Endothelial cell of umbilical vein (primary cell): ENCODE measurements at regions of chr6 and their contacts with region 1.

Region 1: DNA sequence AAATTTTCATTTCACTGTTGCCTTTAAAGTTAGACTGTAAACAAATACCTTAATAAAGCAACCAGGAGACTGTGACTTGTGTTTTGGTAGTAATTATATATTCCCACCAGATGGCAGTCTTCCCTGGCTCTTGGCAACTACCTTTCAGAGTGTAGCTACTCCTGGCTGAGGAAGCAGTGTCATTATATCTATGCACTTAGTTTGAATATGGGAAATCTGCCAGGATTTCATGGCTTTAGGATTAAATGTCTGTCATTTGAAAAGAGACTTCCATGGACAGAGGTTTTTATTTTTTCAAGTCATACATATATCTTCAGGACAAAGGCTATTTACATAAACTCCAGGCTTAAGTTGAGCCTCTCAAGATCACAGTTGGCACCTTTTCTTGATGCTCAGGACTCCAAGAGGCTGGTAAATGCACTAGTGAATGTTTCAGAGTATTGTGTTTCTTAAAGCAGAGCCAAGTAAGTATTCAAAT is 160.1 kb downstream of the C6orf58 start:
- DNase-seq: peak; percentile 79
- H3K4me3 ChIP-seq: no peak overlapping the region
- H3K27ac ChIP-seq: no peak overlapping the region
- H3K4me1 ChIP-seq: no peaks in the 10 kb centered on the region
- H3K27me3 ChIP-seq: peaks cover 1 to 4% of the 10 kb centered on the region in 2 experiments
- CTCF ChIP-seq: peak; percentile 31 to 46
- POLR2A ChIP-seq: no peak

Region 2: GRCh38 chr6:127725821-127726220 is 11.2 kb before region 1 on chr6:
- CTCF ChIA-PET with region 1: interaction called, 12 read pairs
- POLR2A ChIA-PET with region 1: no interaction called
- dilution Hi-C with region 1: no loop called
- intact Hi-C with region 1: no loop called
- DNase-seq: no peak
- H3K4me3 ChIP-seq: no peak overlapping the region
- H3K27ac ChIP-seq: no peak overlapping the region
- H3K4me1 ChIP-seq: no peaks in the 10 kb centered on the region
- H3K27me3 ChIP-seq: peaks cover 9 to 42% of the 10 kb centered on the region in 2 experiments
- CTCF ChIP-seq: no peak
- POLR2A ChIP-seq: no peak

Region 3: GRCh38 chr6:127748290-127748689 is 11.2 kb after region 1 on chr6:
- CTCF ChIA-PET with region 1: interaction called, 14 read pairs
- POLR2A ChIA-PET with region 1: no interaction called
- dilution Hi-C with region 1: no loop called
- intact Hi-C with region 1: no loop called
- DNase-seq: no peak
- H3K4me3 ChIP-seq: no peak overlapping the region
- H3K27ac ChIP-seq: no peak overlapping the region
- H3K4me1 ChIP-seq: no peaks in the 10 kb centered on the region
- H3K27me3 ChIP-seq: peaks cover 0 to 2% of the 10 kb centered on the region in 2 experiments
- CTCF ChIP-seq: no peak
- POLR2A ChIP-seq: no peak

Region 4: DNA sequence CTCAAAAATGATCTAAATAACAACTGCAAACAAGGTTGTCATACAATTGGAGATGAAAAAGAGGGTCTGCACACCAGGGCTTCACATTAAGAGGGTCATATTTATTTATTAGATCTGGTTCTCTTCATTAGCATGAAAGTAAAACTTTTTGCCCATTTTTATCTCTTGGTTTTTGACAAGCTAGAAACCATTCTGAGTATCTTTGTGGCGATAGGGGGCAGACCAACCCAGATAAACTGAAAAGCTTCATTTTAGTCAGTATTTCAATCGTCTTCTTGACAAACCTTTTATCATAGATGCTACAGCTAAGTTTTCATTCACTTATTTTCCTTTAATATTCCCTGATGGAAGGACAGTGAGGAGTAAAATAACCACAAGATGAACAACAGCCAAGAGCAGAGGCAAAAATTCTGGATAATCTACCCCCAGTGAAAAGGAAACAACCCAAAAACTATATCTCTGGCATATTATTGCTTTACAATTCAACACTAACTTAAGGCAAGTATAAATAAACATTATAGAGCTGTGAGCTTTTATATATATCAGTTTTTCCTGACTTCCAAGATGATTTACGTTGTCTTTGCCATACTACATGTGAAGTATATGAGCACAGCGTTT is 118.6 kb after region 1 on chr6:
- CTCF ChIA-PET with region 1: interaction called, 15 read pairs
- POLR2A ChIA-PET with region 1: no interaction called
- dilution Hi-C with region 1: no loop called
- intact Hi-C with region 1: no loop called
- DNase-seq: peak; percentile 61
- H3K4me3 ChIP-seq: no peak overlapping the region
- H3K27ac ChIP-seq: no peak overlapping the region
- H3K4me1 ChIP-seq: no peaks in the 10 kb centered on the region
- H3K27me3 ChIP-seq: no peaks in the 10 kb centered on the region
- CTCF ChIP-seq: peak; percentile 18 to 45
- POLR2A ChIP-seq: no peak

Region 5: GRCh38 chr6:128112494-128112893 is 375.4 kb after region 1 on chr6:
- CTCF ChIA-PET with region 1: no interaction called
- POLR2A ChIA-PET with region 1: no interaction called
- dilution Hi-C with region 1: no loop called
- intact Hi-C with region 1: no loop called
- DNase-seq: peak; percentile 62
- H3K4me3 ChIP-seq: no peak overlapping the region
- H3K27ac ChIP-seq: no peak overlapping the region
- H3K4me1 ChIP-seq: no peaks in the 10 kb centered on the region
- H3K27me3 ChIP-seq: no peaks in the 10 kb centered on the region
- CTCF ChIP-seq: no peak
- POLR2A ChIP-seq: no peak

Region 6: GRCh38 chr6:128327890-128328289 is 590.8 kb after region 1 on chr6:
- CTCF ChIA-PET with region 1: interaction called, 22 read pairs
- POLR2A ChIA-PET with region 1: no interaction called
- dilution Hi-C with region 1: no loop called
- intact Hi-C with region 1: loop called (anchors 1 kb)
- DNase-seq: no peak
- H3K4me3 ChIP-seq: no peak overlapping the region
- H3K27ac ChIP-seq: no peak overlapping the region
- H3K4me1 ChIP-seq: no peaks in the 10 kb centered on the region
- H3K27me3 ChIP-seq: no peaks in the 10 kb centered on the region
- CTCF ChIP-seq: peak; percentile 35 to 37
- POLR2A ChIP-seq: no peak

Region 7: DNA sequence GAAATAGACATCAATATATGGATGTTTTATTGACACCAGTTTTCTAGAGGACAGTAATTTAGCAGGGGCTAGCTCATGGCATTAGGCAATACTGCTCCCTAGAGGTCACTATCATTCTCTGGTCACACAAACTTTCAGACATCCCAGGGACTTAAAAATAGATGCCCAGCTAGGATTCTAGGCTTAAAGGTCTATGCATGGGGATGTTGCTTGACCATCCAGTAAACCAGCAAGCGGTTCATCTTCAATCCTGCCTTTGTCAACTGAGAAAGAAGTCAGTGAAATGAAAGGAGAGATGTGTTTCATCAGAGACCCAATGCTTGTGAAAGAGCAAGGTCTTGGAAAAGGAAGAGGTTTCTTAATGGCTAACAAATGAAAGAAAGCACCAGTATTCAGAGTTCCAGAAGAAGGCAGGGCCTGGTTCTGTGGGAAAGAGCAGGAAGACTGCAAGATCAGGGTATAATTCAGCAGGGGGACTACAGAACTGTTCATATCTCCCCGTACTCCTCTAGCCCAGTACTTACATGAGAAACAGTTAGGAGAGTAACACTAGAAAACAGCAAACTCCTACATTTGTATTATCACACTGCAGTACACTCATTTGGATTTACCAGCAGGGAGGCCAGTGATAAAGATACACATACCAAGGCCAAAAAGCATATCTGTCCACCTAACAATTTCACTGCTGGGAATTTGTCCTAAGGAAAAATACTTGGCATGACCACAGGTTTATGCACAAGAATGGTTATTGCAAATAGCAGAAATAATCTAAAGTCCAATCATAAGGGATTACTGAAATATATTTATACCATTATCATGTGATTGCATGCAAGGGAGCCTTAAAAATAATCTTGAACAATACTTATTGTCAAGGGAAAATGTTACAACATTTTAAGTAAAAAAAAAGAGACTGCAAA is 994.5 kb after region 1 on chr6:
- CTCF ChIA-PET with region 1: interaction called, 100 read pairs
- POLR2A ChIA-PET with region 1: no interaction called
- dilution Hi-C with region 1: no loop called
- intact Hi-C with region 1: loop called (anchors 1 kb)
- DNase-seq: peak; percentile 69
- H3K4me3 ChIP-seq: no peak overlapping the region
- H3K27ac ChIP-seq: no peak overlapping the region
- H3K4me1 ChIP-seq: no peaks in the 10 kb centered on the region
- H3K27me3 ChIP-seq: peaks cover 0 to 5% of the 10 kb centered on the region in 2 experiments
- CTCF ChIP-seq: peak; percentile 51 to 68
- POLR2A ChIP-seq: no peak

Region 8: DNA sequence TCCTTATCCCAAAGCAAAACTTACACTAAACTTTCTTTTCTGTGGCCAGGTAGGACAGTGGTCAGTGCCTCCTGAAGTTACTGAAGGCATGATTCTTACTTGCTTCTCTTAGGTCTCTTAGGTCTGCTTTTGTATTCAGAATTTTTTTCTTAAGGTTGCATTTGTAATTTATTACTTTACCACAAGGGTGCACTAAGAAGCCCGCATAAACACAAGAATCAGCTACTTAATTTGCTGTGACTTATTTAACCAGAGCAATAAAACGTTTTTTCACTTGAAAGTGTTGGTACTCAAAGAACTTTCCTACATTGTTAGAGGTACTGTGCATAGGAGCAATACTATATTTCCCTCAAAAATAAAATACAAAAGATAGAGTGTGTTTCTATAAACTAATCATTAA is 1070.5 kb after region 1 on chr6:
- CTCF ChIA-PET with region 1: interaction called, 12 read pairs
- POLR2A ChIA-PET with region 1: no interaction called
- dilution Hi-C with region 1: no loop called
- intact Hi-C with region 1: no loop called
- DNase-seq: peak; percentile 62
- H3K4me3 ChIP-seq: no peak overlapping the region
- H3K27ac ChIP-seq: no peak overlapping the region
- H3K4me1 ChIP-seq: peaks cover 10% of the 10 kb centered on the region
- H3K27me3 ChIP-seq: peaks cover 7 to 11% of the 10 kb centered on the region in 2 experiments
- CTCF ChIP-seq: peak; percentile 19 to 35
- POLR2A ChIP-seq: no peak

Region 9: DNA sequence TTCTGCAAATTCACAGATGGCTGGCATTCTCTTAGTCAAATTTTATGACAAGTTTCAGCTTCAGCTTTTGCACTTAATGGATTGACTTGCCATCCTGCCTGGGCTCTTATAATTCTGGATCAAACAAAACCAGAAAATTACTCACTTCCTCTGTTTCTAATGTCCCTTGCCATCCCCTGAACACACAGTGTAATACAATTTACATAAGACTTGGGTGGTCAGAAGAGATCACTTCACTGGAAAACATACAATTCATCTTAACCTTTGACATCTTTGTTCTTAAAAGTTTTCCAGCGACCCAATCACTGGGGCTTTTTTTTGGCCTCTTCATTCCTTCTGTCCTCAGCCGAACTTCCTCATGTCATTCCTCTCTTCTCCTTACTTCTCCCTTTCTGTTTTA is 1773.9 kb after region 1 on chr6:
- CTCF ChIA-PET with region 1: no interaction called
- POLR2A ChIA-PET with region 1: no interaction called
- dilution Hi-C with region 1: no loop called
- intact Hi-C with region 1: no loop called
- DNase-seq: peak; percentile 28
- H3K4me3 ChIP-seq: no peak overlapping the region
- H3K27ac ChIP-seq: no peak overlapping the region
- H3K4me1 ChIP-seq: peaks cover 2% of the 10 kb centered on the region
- H3K27me3 ChIP-seq: no peaks in the 10 kb centered on the region
- CTCF ChIP-seq: no peak
- POLR2A ChIP-seq: no peak